Activated CD4-positive, alpha-beta memory T cell treated with anti-CD3 and anti-CD28 coated beads for 36 hours (primary cell): ENCODE measurements at regions of chr9 and their contacts with region 1.

Region 1: DNA sequence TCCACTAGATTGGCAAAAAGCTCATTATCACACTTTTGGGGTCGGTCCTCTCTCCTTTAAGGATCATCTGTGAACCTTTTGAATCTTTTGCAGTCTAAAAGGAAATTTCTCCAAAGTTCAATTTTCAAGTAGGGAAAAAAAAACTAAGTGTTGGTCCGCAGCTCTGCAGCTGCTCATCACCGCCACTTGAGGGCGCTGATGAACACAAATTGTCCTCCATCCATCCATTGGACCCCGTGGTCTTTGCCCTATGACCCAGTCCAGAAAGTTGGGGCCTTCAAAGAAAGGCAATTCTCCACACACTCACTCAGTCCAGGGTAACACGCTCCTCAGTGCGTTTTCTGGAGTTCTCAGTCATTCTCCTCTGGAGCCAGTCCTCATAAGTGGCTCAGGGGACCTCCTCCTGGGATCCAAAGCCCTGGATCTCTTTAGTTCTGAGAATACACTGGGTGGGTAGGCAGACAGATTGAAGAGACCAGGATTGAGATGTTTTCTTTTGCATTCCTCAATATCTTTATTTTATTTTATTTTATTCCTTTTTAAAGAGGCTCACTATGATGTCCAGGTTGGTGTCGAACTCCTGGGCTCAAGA is 63.6 kb upstream of the SLC28A3 start:
- DNase-seq: peak; percentile 27
- H3K4me3 Mint-ChIP-seq: no peak overlapping the region
- H3K27ac Mint-ChIP-seq: no peak overlapping the region
- H3K4me1 Mint-ChIP-seq: no peaks in the 10 kb centered on the region
- H3K27me3 Mint-ChIP-seq: no peaks in the 10 kb centered on the region

Region 2: GRCh38 chr9:84207491-84207951 is 196.7 kb before region 1 on chr9:
- CTCF ChIA-PET with region 1: no interaction called
- POLR2A ChIA-PET with region 1: no interaction called
- intact Hi-C with region 1: no loop called
- DNase-seq: no peak
- H3K4me3 Mint-ChIP-seq: no peak overlapping the region
- H3K27ac Mint-ChIP-seq: no peak overlapping the region
- H3K4me1 Mint-ChIP-seq: no peaks in the 10 kb centered on the region
- H3K27me3 Mint-ChIP-seq: peaks cover 3% of the 10 kb centered on the region

Region 3: DNA sequence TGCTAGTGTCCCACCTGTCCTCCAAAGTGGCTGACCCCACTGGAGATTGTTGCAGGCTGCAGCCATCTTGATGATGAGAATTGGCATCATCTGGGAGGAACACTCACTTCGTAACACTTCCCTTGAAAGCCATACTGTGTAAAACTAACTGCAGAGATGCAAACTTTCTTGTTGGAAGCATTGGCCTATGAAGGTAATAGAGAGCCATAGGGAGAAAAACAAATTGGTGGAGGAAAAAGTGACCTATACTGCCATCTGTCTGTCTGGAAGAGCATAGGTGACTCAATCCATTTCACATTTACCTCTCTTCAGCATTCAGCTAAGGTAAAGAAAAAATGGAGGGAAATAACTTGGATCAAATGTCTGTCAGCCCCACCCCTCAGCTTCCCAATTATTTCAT is 738.8 kb after region 1 on chr9:
- CTCF ChIA-PET with region 1: no interaction called
- POLR2A ChIA-PET with region 1: no interaction called
- intact Hi-C with region 1: loop called (anchors 10 kb)
- DNase-seq: no peak
- H3K4me3 Mint-ChIP-seq: no peak overlapping the region
- H3K27ac Mint-ChIP-seq: no peak overlapping the region
- H3K4me1 Mint-ChIP-seq: no peaks in the 10 kb centered on the region
- H3K27me3 Mint-ChIP-seq: no peaks in the 10 kb centered on the region

Region 4: DNA sequence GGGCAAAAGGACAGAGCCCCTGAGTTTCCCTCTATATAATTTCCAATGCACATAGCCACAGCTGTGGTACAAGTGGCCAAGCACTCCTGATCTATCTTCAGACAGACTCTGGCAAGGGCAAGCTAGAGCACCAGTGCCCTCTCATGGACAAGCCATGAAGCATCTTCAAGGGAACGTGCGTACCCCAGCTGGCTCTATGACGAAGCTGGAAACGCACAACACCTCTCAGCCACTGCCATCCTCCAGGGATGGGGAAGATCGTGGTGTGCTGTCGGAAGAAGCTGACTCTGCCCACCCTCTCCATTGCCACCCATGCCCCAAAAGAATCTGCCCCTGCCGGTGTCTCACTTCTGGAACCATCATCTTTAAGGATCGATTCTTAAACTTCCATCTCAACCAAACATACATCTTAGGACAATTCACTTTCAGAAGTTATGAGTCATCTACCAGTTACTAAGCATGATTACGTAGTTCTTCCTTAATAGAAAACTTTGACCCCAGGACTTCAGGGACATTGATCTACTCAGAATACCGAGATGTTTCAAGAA is 854.7 kb after region 1 on chr9:
- CTCF ChIA-PET with region 1: no interaction called
- POLR2A ChIA-PET with region 1: no interaction called
- intact Hi-C with region 1: loop called (anchors 10 kb)
- DNase-seq: peak; percentile 12
- H3K4me3 Mint-ChIP-seq: no peak overlapping the region
- H3K27ac Mint-ChIP-seq: no peak overlapping the region
- H3K4me1 Mint-ChIP-seq: no peaks in the 10 kb centered on the region
- H3K27me3 Mint-ChIP-seq: peaks cover 5% of the 10 kb centered on the region

Region 5: GRCh38 chr9:85610074-85610860 is 1206.1 kb after region 1 on chr9:
- CTCF ChIA-PET with region 1: interaction called, 3 read pairs
- POLR2A ChIA-PET with region 1: no interaction called
- intact Hi-C with region 1: loop called (anchors 1 kb)
- DNase-seq: peak; percentile 19
- H3K4me3 Mint-ChIP-seq: peak overlapping the region; percentile 17
- H3K27ac Mint-ChIP-seq: peak overlapping the region; percentile 1
- H3K4me1 Mint-ChIP-seq: peaks cover 6% of the 10 kb centered on the region
- H3K27me3 Mint-ChIP-seq: no peaks in the 10 kb centered on the region